Adrenal gland (tissue), 19 donors: ENCODE measurements at regions of chr10 and their contacts with region 1.

Region 1: DNA sequence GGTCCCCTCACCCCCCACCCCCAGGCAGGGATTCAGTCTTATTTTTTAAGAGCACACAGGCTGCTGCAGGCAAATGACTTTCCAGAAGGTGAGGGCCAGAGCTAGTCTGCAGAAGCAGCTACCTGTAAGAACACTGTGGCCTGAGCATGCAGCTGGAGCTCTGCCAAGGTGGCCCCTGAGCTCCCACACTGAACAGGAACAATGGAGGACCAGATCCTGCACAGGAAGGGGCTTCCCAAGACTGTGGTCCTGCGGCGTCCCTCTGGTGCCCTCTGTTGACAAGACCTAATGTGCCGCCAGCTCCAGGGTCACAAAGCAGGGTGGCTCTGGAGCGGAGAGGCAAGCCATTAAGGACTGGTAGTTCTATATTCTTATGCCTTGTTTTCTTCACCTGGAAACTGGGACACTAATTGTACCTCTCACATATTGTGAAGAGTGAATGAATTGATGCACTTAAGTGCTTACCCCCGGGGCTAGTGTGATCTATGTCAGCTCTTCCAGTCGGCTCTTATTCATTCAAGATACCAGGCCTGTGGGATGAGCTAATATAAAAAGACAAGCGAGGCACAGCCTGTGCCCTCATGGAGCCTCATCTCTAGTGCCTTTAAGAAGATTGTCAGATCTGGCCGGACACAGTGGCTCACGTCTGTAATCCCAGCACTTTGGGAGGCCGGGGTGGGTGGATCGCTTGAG is 8.0 kb upstream of the BEND7 start:
- DNase-seq: peak; percentile 39 to 78 (median 64)
- H3K4me3 ChIP-seq: no peak overlapping the region
- H3K27ac ChIP-seq: no peak overlapping the region
- H3K4me1 ChIP-seq: no peaks in the 10 kb centered on the region
- H3K27me3 ChIP-seq: peaks cover 5% of the 10 kb centered on the region
- CTCF ChIP-seq: peak; percentile 30 to 63 (median 50)
- POLR2A ChIP-seq: no peak

Region 2: GRCh38 chr10:13371897-13372470 is 164.8 kb before region 1 on chr10:
- intact Hi-C with region 1: loop called in 1 of 2 experiments (anchors 5 kb)
- DNase-seq: peak; percentile 72 to 92 (median 78)
- H3K4me3 ChIP-seq: no peak overlapping the region
- H3K27ac ChIP-seq: no peak overlapping the region
- H3K4me1 ChIP-seq: no peaks in the 10 kb centered on the region
- H3K27me3 ChIP-seq: no peaks in the 10 kb centered on the region
- CTCF ChIP-seq: peak; percentile 82 to 96 (median 86)
- POLR2A ChIP-seq: no peak